ENCODE measurements at regions of chr16 and their contacts with region 1.

Region 1: GRCh38 chr16:53054670-53055485 is at the start of gene CHD9:
- DNase-seq: peak; percentile 87
- H3K4me3 ChIP-seq: peak within 1 kb of the TSS; percentile 47 to 75 (median 57)
- H3K27ac ChIP-seq: peak within 1 kb of the TSS; percentile 75
- H3K4me1 ChIP-seq: peaks cover 26% of the 10 kb centered on the region
- H3K27me3 ChIP-seq: no peaks in the 10 kb centered on the region
- CTCF ChIP-seq: peak; percentile 99
- POLR2A ChIP-seq: peak; percentile 54
- total RNA-seq, gene CHD9: 59.2 and 62.1 TPM in 2 replicates

Region 2: GRCh38 chr16:53091466-53092211 is 36.8 kb after region 1 on chr16:
- CTCF ChIA-PET with region 1: interaction called, 31 read pairs
- POLR2A ChIA-PET with region 1: interaction called, 3 read pairs
- dilution Hi-C with region 1: no loop called
- intact Hi-C with region 1: loop called (anchors 1 kb)
- DNase-seq: peak; percentile 69
- H3K4me3 ChIP-seq: no peak overlapping the region
- H3K27ac ChIP-seq: peak overlapping the region; percentile 72
- H3K4me1 ChIP-seq: peaks cover 39% of the 10 kb centered on the region
- H3K27me3 ChIP-seq: no peaks in the 10 kb centered on the region
- CTCF ChIP-seq: no peak
- POLR2A ChIP-seq: no peak

Region 3: DNA sequence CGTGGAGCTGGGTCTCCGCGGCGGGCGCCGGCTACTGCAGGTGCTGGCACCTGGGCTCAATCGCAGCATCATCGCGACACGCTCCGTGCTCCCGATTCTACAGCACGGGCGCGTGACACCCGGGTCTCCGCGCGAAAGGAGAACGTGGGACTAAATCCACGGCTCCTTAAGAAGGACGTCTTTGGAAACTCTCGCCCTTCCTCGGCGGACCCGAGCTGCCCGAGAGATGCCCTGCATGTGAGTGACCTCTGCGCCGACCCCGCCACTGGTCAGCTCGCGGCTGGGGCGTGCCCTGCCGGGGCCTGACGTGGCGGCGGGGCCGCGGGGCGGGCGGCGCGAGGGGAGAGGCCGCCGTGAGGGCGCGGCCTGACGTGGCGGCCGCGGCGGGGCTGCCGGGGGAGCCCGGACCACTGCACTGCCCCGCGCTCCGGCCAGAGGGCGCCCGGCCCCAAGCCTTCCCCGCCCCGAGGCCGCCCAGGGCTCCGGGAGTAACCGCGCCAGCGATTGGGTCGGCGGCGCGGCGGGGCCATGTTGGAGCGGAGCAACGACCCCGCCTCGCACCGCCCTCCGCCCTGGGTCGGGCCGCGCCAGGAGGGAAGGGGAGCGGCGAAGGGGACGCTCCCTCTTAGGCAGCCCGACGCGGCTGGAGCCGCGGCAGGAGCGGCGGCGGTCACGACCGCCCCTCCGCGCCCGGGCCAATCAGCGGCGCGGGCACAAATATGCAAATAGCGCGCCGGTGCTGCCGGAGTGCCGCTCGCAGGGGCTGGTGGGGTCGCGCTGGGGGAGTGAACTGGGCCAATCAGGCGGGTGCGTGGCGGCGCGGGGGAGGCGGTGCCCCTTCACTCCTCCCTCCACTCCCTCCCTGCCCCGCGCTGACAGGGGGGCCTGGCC is 75.5 kb after region 1 on chr16:
- CTCF ChIA-PET with region 1: interaction called, 36 read pairs
- POLR2A ChIA-PET with region 1: interaction called, 3 read pairs
- dilution Hi-C with region 1: no loop called
- intact Hi-C with region 1: loop called (anchors 1 kb)
- DNase-seq: peak; percentile 96
- H3K4me3 ChIP-seq: peak overlapping the region; percentile 71 to 92 (median 74)
- H3K27ac ChIP-seq: peak overlapping the region; percentile 89
- H3K4me1 ChIP-seq: peaks cover 18% of the 10 kb centered on the region
- H3K27me3 ChIP-seq: no peaks in the 10 kb centered on the region
- CTCF ChIP-seq: peak; percentile 55 to 63
- POLR2A ChIP-seq: peak; percentile 68

Region 4: GRCh38 chr16:53159781-53160436 is 105.0 kb after region 1 on chr16:
- CTCF ChIA-PET with region 1: interaction called, 34 read pairs
- POLR2A ChIA-PET with region 1: no interaction called
- dilution Hi-C with region 1: no loop called
- intact Hi-C with region 1: loop called (anchors 1 kb)
- DNase-seq: peak; percentile 70
- H3K4me3 ChIP-seq: no peak overlapping the region
- H3K27ac ChIP-seq: no peak overlapping the region
- H3K4me1 ChIP-seq: no peaks in the 10 kb centered on the region
- H3K27me3 ChIP-seq: no peaks in the 10 kb centered on the region
- CTCF ChIP-seq: peak; percentile 54 to 66
- POLR2A ChIP-seq: no peak

Region 5: DNA sequence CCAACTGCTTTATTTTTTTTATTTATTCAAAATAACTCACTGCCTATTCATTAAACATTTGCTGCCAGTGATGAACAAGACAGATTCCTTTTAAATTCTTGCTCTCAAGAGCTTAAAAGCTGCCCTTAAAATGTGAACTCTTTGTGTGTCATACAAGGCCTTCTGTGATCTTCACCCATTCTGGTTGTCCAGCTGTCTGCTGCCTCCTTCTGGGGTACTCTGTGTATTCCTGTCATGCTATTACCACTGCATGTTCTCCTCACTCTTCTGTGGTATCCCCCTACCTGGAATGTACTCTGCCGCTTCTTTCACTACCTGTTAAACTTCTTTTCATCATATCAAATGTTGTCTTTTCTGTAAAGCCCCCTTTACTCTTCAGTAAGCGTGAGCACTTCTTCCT is 165.7 kb after region 1 on chr16:
- CTCF ChIA-PET with region 1: interaction called, 61 read pairs
- POLR2A ChIA-PET with region 1: no interaction called
- dilution Hi-C with region 1: no loop called
- intact Hi-C with region 1: loop called (anchors 1 kb)
- DNase-seq: peak; percentile 71
- H3K4me3 ChIP-seq: peak overlapping the region in 1 of 3 experiments; percentile 49
- H3K27ac ChIP-seq: peak overlapping the region; percentile 91
- H3K4me1 ChIP-seq: peaks cover 37% of the 10 kb centered on the region
- H3K27me3 ChIP-seq: no peaks in the 10 kb centered on the region
- CTCF ChIP-seq: peak; percentile 42 to 46
- POLR2A ChIP-seq: no peak

Region 6: GRCh38 chr16:53415504-53415903 is 360.6 kb after region 1 on chr16:
- CTCF ChIA-PET with region 1: no interaction called
- POLR2A ChIA-PET with region 1: no interaction called
- dilution Hi-C with region 1: no loop called
- intact Hi-C with region 1: no loop called
- DNase-seq: no peak
- H3K4me3 ChIP-seq: no peak overlapping the region
- H3K27ac ChIP-seq: no peak overlapping the region
- H3K4me1 ChIP-seq: no peaks in the 10 kb centered on the region
- H3K27me3 ChIP-seq: no peaks in the 10 kb centered on the region
- CTCF ChIP-seq: no peak
- POLR2A ChIP-seq: no peak

Region 7: GRCh38 chr16:53435066-53435688 is 380.3 kb after region 1 on chr16:
- CTCF ChIA-PET with region 1: no interaction called
- POLR2A ChIA-PET with region 1: no interaction called
- dilution Hi-C with region 1: no loop called
- intact Hi-C with region 1: loop called (anchors 10 kb)
- DNase-seq: peak; percentile 93
- H3K4me3 ChIP-seq: peak overlapping the region; percentile 81 to 90 (median 81)
- H3K27ac ChIP-seq: peak overlapping the region; percentile 78
- H3K4me1 ChIP-seq: peaks cover 5% of the 10 kb centered on the region
- H3K27me3 ChIP-seq: no peaks in the 10 kb centered on the region
- CTCF ChIP-seq: no peak
- POLR2A ChIP-seq: peak; percentile 37

Measured in endothelial cell of umbilical vein (primary cell).